Endothelial cell of umbilical vein (primary cell): ENCODE measurements at regions of chr2 and their contacts with region 1.

Region 1: DNA sequence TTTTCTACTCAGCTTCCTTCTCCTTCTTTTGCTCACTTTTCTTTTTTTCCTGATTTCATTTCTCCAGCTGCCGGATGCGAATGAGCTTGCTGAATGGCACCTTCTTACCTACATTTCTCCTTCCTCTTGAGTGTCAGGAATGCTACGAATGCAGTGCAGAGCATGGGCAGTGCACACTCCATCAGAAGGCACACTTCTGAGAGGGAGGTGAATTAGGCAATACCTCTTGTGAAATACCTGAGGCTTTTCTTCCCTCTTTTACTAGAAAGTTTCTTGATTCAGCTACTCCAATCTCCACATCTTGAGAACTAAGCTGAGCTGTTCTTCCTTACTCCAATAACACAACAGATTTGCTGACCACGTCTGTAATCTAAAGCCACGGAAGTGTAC is 51.1 kb downstream of the PLEKHM3 start:
- DNase-seq: no peak
- H3K4me3 ChIP-seq: no peak overlapping the region
- H3K27ac ChIP-seq: no peak overlapping the region
- H3K4me1 ChIP-seq: no peaks in the 10 kb centered on the region
- H3K27me3 ChIP-seq: no peaks in the 10 kb centered on the region
- CTCF ChIP-seq: no peak
- POLR2A ChIP-seq: no peak

Region 2: DNA sequence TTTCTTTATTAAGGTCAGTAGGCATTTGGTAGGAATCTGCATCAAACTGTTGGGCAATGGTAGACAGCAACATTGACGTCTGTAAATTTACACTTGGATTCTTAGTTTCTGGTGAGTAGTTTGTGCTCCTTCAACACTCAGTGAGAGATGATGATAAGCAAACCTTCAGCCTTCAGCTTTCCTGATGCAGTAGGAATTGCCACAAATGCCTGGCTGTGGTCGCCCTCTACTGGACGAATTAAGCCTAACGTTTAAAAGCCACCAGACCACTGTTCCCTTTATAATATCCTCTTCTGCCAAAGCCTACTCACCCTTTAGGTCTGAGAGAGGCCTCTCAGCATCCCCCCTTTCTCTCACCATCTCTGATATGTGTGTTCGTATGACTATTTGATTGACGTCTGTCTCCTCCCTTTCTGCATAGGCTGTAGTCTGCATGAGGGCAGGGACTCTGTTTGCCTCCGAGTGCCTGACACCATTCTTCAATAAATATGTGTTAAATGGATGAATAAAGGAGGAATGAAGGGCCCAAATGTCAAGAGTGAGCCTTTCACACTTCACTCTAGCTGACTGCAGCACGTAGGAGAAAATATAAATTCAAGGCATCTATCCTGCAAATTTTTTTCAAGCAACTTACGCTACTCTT is 98.2 kb after region 1 on chr2:
- CTCF ChIA-PET with region 1: interaction called, 5 read pairs
- POLR2A ChIA-PET with region 1: no interaction called
- dilution Hi-C with region 1: no loop called
- intact Hi-C with region 1: loop called (anchors 5 kb)
- DNase-seq: peak; percentile 77
- H3K4me3 ChIP-seq: no peak overlapping the region
- H3K27ac ChIP-seq: no peak overlapping the region
- H3K4me1 ChIP-seq: no peaks in the 10 kb centered on the region
- H3K27me3 ChIP-seq: peaks cover 3 to 8% of the 10 kb centered on the region in 2 experiments
- CTCF ChIP-seq: peak; percentile 80 to 84
- POLR2A ChIP-seq: no peak

Region 3: GRCh38 chr2:208134928-208135586 is 160.8 kb after region 1 on chr2:
- CTCF ChIA-PET with region 1: no interaction called
- POLR2A ChIA-PET with region 1: no interaction called
- dilution Hi-C with region 1: no loop called
- intact Hi-C with region 1: no loop called
- DNase-seq: no peak
- H3K4me3 ChIP-seq: no peak overlapping the region
- H3K27ac ChIP-seq: no peak overlapping the region
- H3K4me1 ChIP-seq: no peaks in the 10 kb centered on the region
- H3K27me3 ChIP-seq: no peaks in the 10 kb centered on the region
- CTCF ChIP-seq: no peak
- POLR2A ChIP-seq: no peak